ENCODE measurements at regions of chr1 and their contacts with region 1.

Region 1: GRCh38 chr1:89820422-89821321 is at the start of gene LRRC8D:
- DNase-seq: peak; percentile 79
- ATAC-seq: peak; percentile 68
- H3K4me3 Mint-ChIP-seq: peak within 1 kb of the TSS; percentile 87
- H3K27ac Mint-ChIP-seq: peak within 1 kb of the TSS; percentile 84
- H3K4me1 Mint-ChIP-seq: peaks cover 31% of the 10 kb centered on the region
- H3K27me3 Mint-ChIP-seq: peaks cover 2% of the 10 kb centered on the region
- total RNA-seq, gene LRRC8D: 25.1 to 26.0 TPM

Region 2: DNA sequence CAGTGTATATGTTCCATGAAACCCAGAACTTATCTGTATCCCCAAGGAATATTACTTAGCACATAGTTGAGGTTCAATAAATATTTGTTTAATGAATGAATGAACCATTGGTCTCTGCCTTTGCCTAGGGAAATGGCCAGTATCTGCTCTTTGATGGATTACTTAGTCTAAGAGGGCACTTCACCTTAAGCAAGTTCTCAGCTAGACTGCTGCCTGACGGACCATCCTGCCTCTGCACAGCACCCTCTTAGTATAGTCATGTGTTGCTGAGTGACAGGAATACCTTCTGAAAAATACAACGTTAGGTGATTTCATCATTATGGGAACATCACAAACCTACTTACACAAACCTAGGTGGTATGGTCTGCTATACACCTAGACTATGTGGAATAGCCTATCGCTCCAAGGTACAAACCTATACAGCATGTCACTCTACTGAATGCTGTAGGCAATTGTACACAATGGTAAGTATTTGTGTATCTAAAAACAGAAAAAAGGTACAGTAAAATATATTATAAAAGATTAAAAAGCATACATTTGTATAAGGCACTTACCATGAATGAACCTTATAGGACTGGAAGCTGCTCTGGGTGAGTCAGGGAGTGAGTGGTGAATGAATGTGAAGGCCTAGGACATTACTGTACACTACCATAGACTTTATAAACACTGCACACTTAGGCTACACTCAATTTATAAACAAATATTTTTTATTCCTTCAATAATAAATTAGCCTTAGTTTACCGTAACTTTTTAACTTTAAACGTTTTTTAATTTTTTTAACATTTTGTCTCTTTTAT is 83.5 kb before region 1 on chr1:
- POLR2A ChIA-PET with region 1: no interaction called
- DNase-seq: no peak
- ATAC-seq: no peak
- H3K4me3 Mint-ChIP-seq: no peak overlapping the region
- H3K27ac Mint-ChIP-seq: no peak overlapping the region
- H3K4me1 Mint-ChIP-seq: peaks cover 29% of the 10 kb centered on the region
- H3K27me3 Mint-ChIP-seq: no peaks in the 10 kb centered on the region

Region 3: GRCh38 chr1:89843281-89844121 is 22.8 kb after region 1 on chr1:
- POLR2A ChIA-PET with region 1: interaction called, 23 read pairs
- DNase-seq: peak; percentile 87
- ATAC-seq: peak; percentile 88
- H3K4me3 Mint-ChIP-seq: peak overlapping the region; percentile 95
- H3K27ac Mint-ChIP-seq: peak overlapping the region; percentile 95
- H3K4me1 Mint-ChIP-seq: peaks cover 48% of the 10 kb centered on the region
- H3K27me3 Mint-ChIP-seq: no peaks in the 10 kb centered on the region